ENCODE measurements at regions of chr22 and their contacts with region 1.

Region 1: DNA sequence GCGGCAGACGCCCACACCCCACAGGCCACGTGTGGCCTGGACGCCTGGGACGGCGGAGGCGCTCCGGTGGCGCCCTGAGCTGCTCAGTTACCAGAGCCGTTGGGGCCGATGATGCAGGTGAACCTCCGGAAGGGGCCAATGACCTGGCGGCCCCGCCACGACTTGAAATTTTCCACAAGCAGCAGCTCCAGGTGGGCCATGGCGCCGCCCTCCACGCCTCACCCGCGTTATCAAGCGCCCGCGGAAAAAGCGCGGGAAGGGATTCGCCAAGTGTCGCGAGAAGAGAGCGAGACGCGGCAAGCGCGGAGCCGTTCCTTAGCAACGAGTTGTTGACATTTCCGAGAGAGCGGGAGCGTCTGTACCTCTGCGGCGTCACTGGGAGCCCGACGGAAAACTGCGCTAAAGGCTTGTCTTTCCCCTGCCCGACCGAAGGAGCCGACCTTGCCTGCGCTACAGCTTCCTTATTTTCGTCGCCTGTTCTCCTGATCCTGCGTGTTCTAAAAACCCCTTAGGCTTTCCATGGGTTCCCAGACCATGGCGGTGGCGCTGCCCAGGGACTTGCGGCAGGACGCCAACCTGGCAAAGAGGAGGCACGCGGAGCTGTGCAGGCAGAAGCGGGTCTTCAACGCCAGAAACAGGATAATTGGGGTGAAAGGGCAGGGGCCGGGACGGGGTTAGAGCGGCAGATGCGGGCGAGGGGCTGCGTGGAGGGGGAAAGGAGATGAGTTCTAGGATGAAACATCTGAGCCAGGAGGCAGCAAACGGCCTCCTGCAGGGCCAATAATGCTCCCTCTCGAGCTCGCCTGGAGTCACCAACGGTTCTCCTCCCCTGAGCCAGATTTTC is at the starts of genes RIBC2 and SMC1B:
- DNase-seq: peak; percentile 95
- H3K4me3 Mint-ChIP-seq: peak within 1 kb of the TSS; percentile 86
- H3K27ac Mint-ChIP-seq: no peak within 1 kb of the TSS
- H3K4me1 Mint-ChIP-seq: peaks cover 12% of the 10 kb centered on the region
- H3K27me3 Mint-ChIP-seq: no peaks in the 10 kb centered on the region
- total RNA-seq, gene RIBC2: 6.2 to 6.3 TPM
- total RNA-seq, gene SMC1B: 1.1 to 1.3 TPM

Region 2: DNA sequence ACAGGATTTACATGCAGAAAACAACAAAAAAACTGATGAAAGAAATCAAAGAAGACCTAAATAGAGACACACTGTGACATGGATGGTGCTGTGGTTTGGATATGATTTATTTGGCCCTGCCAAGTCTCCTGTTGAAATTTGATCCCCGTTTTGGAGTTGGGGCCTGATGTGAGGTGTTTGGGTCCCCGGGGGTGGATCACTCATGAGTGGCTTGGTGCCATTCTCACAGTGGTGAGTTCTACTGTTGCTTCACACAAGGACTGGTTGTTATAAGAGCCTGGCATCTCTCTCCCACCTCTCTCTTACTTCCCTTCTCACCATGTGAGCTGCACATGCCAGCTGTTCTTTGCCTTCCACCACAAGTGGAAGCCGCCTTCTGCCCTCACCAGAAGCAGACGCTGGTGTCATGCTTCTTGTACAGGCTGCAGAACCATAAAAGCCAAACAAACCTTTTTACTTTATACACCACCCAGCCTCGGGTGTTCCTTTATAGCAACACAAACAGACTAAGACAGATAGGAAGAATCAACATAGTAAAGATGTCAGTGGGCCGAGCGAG is 907.7 kb before region 1 on chr22:
- CTCF ChIA-PET with region 1: no interaction called
- intact Hi-C with region 1: no loop called
- DNase-seq: no peak
- H3K4me3 Mint-ChIP-seq: no peak overlapping the region
- H3K27ac Mint-ChIP-seq: no peak overlapping the region
- H3K4me1 Mint-ChIP-seq: no peaks in the 10 kb centered on the region
- H3K27me3 Mint-ChIP-seq: peaks cover 10% of the 10 kb centered on the region

Region 3: GRCh38 chr22:45309472-45310227 is 103.9 kb before region 1 on chr22 and contains the start of gene FAM118A:
- CTCF ChIA-PET with region 1: no interaction called
- intact Hi-C with region 1: loop called (anchors 1 kb)
- DNase-seq: peak; percentile 94
- H3K4me3 Mint-ChIP-seq: peak within 1 kb of the TSS; percentile 79
- H3K27ac Mint-ChIP-seq: peak within 1 kb of the TSS; percentile 87
- H3K4me1 Mint-ChIP-seq: peaks cover 45% of the 10 kb centered on the region
- H3K27me3 Mint-ChIP-seq: no peaks in the 10 kb centered on the region
- total RNA-seq, gene FAM118A: 62.2 to 66.9 TPM